Common myeloid progenitor, CD34-positive (primary cell): ENCODE measurements at regions of chr11 and their contacts with region 1.

Region 1: GRCh38 chr11:77091146-77091940 is 11.3 kb upstream of the OMP start:
- DNase-seq: peak; percentile 70 to 81 (median 79)
- H3K4me3 ChIP-seq: no peak overlapping the region
- H3K27ac ChIP-seq: no peak overlapping the region
- H3K4me1 ChIP-seq: peaks cover 0 to 6% (median 3%) of the 10 kb centered on the region in 4 experiments
- H3K27me3 ChIP-seq: no peaks in the 10 kb centered on the region

Region 2: DNA sequence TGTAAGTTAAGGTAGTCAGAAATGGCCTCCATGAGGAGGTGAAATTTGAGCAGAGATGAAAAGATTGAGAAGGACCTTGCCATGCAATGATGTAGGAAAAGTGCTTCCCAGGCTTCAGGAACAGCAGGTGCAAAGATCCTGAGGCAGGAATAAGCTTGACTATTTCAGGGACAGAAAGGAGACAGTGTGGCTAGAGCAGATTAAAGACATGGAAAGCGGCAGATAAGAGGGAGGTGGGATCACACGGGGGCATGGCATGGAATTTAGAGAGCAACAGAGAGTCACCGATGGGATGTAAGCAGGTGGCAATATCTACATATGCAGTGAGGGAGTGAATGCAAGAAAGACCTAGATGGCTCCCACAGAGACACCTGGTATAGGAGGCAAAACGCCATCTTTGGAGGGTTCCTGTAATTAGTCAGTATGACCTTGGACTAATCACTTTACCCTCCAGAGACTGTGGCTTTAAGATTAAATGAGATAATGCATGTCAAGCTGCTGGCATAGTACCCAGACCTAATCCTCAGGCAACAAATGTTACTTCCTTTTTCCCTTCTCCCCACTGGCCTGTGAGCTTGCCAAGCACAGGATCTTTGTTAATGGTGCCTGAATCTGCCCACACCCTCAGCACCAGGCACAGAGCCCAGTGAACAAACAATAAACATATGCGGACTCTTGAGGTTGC is 255.3 kb before region 1 on chr11:
- CTCF ChIA-PET with region 1: no interaction called
- POLR2A ChIA-PET with region 1: no interaction called
- DNase-seq: peak in 1 of 3 donors; percentile 26
- H3K4me3 ChIP-seq: no peak overlapping the region
- H3K27ac ChIP-seq: no peak overlapping the region
- H3K4me1 ChIP-seq: peaks cover 0 to 4% (median 0%) of the 10 kb centered on the region in 4 experiments
- H3K27me3 ChIP-seq: peaks cover 0 to 2% (median 0%) of the 10 kb centered on the region in 5 experiments

Region 3: DNA sequence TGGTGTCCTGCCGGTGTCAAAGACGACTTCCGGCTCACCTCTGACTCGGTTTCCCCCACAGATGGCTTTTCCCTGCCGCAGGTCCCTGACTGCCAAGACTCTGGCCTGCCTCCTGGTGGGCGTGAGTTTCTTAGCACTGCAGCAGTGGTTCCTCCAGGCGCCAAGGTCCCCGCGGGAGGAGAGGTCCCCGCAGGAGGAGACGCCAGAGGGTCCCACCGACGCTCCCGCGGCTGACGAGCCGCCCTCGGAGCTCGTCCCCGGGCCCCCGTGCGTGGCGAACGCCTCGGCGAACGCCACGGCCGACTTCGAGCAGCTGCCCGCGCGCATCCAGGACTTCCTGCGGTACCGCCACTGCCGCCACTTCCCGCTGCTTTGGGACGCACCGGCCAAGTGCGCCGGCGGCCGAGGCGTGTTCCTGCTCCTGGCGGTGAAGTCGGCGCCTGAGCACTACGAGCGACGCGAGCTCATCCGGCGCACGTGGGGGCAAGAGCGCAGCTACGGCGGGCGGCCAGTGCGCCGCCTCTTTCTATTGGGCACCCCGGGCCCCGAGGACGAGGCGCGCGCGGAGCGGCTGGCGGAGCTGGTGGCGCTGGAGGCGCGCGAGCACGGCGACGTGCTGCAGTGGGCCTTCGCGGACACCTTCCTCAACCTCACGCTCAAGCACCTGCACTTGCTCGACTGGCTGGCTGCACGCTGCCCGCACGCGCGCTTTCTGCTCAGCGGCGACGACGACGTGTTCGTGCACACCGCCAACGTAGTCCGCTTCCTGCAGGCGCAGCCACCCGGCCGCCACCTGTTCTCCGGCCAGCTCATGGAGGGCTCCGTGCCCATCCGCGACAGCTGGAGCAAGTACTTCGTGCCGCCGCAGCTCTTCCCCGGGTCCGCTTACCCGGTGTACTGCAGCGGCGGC is 51.6 kb before region 1 on chr11:
- CTCF ChIA-PET with region 1: interaction called, 34 read pairs
- POLR2A ChIA-PET with region 1: no interaction called
- DNase-seq: peak; percentile 42 to 76 (median 64)
- H3K4me3 ChIP-seq: peak overlapping the region in 5 of 7 experiments; percentile 19 to 72 (median 56)
- H3K27ac ChIP-seq: no peak overlapping the region
- H3K4me1 ChIP-seq: peaks cover 0 to 10% (median 9%) of the 10 kb centered on the region in 4 experiments
- H3K27me3 ChIP-seq: peaks cover 0 to 37% (median 13%) of the 10 kb centered on the region in 5 experiments

Region 4: GRCh38 chr11:77047007-77047927 is 44.1 kb before region 1 on chr11:
- CTCF ChIA-PET with region 1: interaction called, 49 read pairs
- POLR2A ChIA-PET with region 1: no interaction called
- DNase-seq: peak; percentile 96 to 98 (median 98)
- H3K4me3 ChIP-seq: peak overlapping the region in 6 of 7 experiments; percentile 49 to 82 (median 64)
- H3K27ac ChIP-seq: no peak overlapping the region
- H3K4me1 ChIP-seq: peaks cover 0 to 13% (median 7%) of the 10 kb centered on the region in 4 experiments
- H3K27me3 ChIP-seq: peaks cover 0 to 14% (median 6%) of the 10 kb centered on the region in 5 experiments

Region 5: DNA sequence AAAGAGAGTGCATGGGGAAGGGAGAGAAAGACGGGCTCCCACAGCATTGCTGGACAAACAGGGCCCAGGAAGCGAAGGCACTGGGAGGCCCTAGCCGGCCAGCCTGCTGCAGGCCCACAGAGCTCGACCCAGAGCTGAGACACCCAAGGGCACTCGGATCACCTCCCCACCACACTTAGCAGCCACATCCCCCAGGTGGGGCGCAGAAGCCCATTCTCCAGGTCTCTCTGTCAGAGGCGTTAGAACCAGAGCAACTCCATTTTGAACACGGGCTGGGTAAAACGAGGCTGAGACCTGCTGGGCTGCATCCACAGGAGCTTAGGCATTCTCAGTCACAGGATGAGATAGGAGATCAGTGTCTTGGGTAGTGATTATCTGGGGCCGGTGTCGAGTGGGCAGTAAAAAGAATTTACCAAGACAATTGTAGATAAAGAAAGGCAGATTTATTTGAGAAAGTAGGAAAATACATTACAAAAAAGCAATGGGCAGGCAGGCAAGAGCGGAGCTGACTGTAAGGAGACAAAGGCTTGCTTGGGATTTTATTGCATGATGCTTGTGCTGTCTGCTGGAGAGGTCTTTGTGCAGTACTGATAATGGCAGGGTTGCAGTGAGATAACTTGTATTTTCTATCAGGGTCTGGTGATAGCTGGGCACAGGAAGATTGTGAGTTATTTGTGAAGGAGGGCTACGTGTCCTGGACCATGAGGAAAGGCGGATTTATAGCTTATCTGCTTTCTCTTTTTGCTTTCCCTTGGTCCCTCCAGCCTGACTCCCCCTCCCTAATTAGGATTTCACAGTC is 37.9 kb before region 1 on chr11:
- CTCF ChIA-PET with region 1: interaction called, 49 read pairs
- POLR2A ChIA-PET with region 1: no interaction called
- DNase-seq: no peak
- H3K4me3 ChIP-seq: no peak overlapping the region
- H3K27ac ChIP-seq: no peak overlapping the region
- H3K4me1 ChIP-seq: no peaks in the 10 kb centered on the region
- H3K27me3 ChIP-seq: peaks cover 0 to 5% (median 0%) of the 10 kb centered on the region in 5 experiments

Region 6: DNA sequence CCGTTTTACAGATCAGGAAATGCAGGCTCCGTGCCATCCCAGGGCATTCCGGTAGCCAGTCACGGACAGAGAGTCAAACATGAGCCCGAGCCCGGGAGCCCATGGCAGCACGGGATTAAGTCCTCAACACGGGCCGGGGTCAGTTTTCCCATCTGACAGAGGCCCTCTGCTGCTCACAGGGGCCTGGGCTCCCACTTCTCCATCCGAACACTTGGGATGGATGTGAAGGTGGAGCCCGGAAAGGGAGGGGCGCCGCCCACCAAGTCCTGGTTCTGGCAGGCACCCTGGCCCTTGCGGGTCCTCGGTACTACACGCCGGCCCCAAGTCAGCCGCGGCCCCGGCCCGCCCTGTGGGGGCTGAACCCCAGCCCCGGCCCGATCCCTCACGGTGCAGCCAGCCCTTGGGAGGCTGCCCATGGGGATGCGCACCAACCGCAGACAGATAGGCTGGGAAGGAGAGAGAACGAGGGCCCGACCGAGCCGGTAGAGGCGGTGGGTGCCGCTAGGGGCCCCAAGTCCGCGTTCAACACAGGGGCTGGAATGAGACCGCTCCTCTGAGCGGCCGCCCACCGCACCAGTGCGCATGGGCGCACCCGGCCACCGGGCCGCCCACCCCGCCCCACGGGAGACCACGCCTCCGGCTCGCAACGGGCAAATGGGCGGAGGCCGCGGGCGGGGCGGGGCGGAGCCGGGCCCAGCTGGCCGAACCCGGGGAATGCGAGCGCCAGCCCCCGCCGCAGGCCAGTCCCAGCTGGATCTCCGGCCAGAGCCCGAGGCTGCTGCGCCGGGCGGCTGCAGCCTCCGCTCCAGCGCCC is 24.9 kb before region 1 on chr11 and contains the start of gene CAPN5:
- CTCF ChIA-PET with region 1: interaction called, 67 read pairs
- POLR2A ChIA-PET with region 1: no interaction called
- DNase-seq: peak; percentile 89 to 94 (median 92)
- H3K4me3 ChIP-seq: peak within 1 kb of the TSS; percentile 69 to 85 (median 70)
- H3K27ac ChIP-seq: no peak within 1 kb of the TSS
- H3K4me1 ChIP-seq: peaks cover 4 to 14% (median 11%) of the 10 kb centered on the region in 4 experiments
- H3K27me3 ChIP-seq: peaks cover 0 to 8% (median 4%) of the 10 kb centered on the region in 5 experiments

Region 7: DNA sequence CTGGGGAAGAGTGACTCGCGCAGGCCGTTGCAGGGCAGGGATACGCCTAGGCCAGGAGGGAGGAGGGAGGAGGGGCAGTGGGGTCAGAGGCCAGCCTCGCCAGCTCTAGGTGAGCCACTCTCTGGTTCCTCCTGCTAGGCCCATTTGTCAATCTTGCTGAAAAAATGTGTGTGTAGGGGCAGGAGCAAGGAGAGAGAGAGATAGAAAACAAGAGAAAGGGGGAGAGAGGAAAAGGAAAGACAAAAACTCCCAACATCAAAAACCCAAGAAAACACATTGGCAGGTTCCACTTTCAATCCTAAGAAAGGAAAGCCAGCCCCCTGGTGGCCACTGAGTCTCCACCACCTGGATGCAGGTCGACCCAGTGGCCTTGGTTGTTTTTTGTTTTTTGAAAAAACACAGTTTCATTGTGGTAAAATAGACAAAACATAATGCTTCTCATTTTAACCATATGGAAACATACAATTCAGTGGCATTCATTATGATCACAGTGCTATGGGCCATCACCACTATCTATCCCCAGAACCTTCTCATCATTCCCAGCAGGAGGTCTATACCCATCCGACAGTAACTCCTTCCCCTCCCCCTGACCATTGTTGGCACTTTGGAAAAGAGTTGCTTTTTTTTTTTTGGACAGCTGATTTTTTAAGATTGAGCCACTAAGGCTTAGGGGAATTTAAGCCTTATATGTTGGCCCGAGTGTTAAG is 22.2 kb after region 1 on chr11:
- CTCF ChIA-PET with region 1: interaction called, 18 read pairs
- POLR2A ChIA-PET with region 1: no interaction called
- DNase-seq: peak; percentile 46 to 64 (median 56)
- H3K4me3 ChIP-seq: no peak overlapping the region
- H3K27ac ChIP-seq: no peak overlapping the region
- H3K4me1 ChIP-seq: no peaks in the 10 kb centered on the region
- H3K27me3 ChIP-seq: no peaks in the 10 kb centered on the region